Dorsolateral prefrontal cortex (tissue), 120 donors: ENCODE measurements at regions of chr9 and their contacts with region 1.

Region 1: DNA sequence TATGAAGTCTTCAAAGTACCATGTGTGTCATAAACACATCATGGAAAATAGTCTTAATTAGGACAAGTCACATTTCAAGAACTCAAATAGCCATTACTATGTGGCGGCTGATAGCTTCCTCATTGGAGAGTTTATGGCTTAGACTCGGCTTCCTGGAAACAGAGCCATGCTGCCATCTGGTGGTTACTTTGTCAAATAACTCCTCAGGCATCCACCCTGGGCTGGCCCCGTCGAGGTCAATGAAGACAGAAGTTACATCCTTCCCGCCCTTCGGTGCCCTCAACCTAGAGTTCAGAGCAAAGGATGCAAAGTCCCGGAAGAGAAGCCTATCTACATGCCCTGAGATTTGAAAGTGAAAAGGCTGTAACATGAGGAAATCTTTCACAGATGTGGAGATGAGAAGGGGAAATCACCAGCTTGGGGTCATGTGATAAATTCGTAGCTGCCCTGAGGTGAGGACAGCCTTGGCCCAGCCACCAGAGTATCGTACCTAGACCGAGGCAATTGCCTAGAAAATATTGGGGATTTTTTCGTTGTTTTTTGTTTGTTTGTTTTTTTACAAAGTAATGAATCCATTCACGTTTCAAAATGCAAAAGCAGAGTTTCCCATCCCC is 45.5 kb upstream of the ZNF169 start:
- DNase-seq: peak; percentile 29 to 76 (median 69)
- H3K4me3 ChIP-seq: peak overlapping the region in 1 of 59 donors; percentile 39
- H3K27ac ChIP-seq: no peak overlapping the region
- H3K27me3 ChIP-seq: peaks cover 0 to 4% (median 0%) of the 10 kb centered on the region in 45 donors
- CTCF ChIP-seq: peak; percentile 76 to 98 (median 92)

Region 2: GRCh38 chr9:93682232-93682968 is 531.2 kb before region 1 on chr9:
- intact Hi-C with region 1: loop called (anchors 2 to 10 kb)
- DNase-seq: peak in 9 of 10 donors; percentile 34 to 76 (median 52)
- H3K4me3 ChIP-seq: no peak overlapping the region
- H3K27ac ChIP-seq: no peak overlapping the region
- H3K27me3 ChIP-seq: no peaks in the 10 kb centered on the region
- CTCF ChIP-seq: peak; percentile 53 to 83 (median 73)

Region 3: DNA sequence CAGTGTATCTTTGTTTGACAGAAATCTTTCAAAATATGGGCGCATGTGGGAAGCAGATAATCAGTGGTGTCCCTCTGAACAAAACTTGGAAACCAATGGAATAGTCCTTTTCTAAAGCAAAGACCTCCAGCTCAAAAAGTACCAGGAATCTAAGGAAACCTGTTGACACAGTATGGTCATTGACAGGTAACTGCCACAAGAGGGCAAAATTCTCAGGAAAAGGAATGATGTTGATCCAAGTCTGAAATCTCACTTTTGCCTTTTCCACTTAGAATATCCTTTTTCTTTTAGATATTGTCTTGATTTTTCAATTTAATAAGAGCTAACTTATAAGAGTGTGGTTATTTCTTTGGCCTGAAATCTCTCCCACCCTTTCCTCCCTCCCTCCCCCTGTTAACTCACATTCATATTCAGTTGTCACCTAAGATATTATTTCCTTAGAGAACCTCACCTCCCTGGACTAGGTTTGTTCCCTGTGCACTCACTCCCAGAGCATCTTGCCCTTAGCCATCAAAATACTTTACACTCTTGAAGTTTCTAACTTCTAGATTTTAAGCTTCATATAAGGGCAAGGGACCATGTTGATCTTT is 199.5 kb before region 1 on chr9:
- intact Hi-C with region 1: loop called in 1 of 2 experiments (anchors 5 kb)
- DNase-seq: no peak
- H3K4me3 ChIP-seq: no peak overlapping the region
- H3K27ac ChIP-seq: no peak overlapping the region
- H3K27me3 ChIP-seq: no peaks in the 10 kb centered on the region
- CTCF ChIP-seq: peak; percentile 35 to 73 (median 60)

Region 4: DNA sequence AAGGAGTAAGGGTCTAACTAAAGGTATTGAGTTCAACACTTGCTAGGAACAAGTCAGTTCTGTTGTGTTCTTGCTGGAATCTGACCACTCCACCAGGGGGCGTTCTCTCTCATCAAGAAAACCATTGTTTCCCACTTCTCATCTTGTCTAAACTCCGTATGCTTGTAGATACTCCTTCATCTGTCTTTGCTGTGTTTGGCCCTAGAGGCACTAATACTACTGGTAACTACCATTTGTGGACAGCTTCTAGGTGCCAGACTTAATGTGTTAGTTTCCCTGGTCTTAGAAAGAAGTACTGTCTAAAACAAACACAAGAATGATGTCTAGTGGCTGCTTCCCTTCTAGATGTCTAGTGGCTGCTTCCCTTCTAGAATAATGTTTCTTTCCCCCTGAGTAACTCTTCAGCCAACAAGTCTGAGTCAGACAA is 148.1 kb before region 1 on chr9:
- intact Hi-C with region 1: loop called (anchors 1 to 2 kb)
- DNase-seq: peak; percentile 46 to 89 (median 66)
- H3K4me3 ChIP-seq: no peak overlapping the region
- H3K27ac ChIP-seq: peak overlapping the region in 17 of 59 donors; percentile 7 to 61 (median 33)
- H3K27me3 ChIP-seq: no peaks in the 10 kb centered on the region
- CTCF ChIP-seq: peak; percentile 80 to 98 (median 92)

Region 5: GRCh38 chr9:94178927-94179326 is 34.7 kb before region 1 on chr9:
- intact Hi-C with region 1: no loop called
- DNase-seq: no peak
- H3K4me3 ChIP-seq: no peak overlapping the region
- H3K27ac ChIP-seq: peak overlapping the region in 7 of 59 donors; percentile 13 to 51 (median 28)
- H3K27me3 ChIP-seq: no peaks in the 10 kb centered on the region
- CTCF ChIP-seq: no peak